ENCODE measurements at regions of chr17 and their contacts with region 1.

Region 1: GRCh38 chr17:3012926-3013581 is 50.4 kb downstream of the OR1D5 start:
- DNase-seq: peak; percentile 86
- ATAC-seq: peak; percentile 97
- H3K4me3 Mint-ChIP-seq: no peak overlapping the region
- H3K27ac Mint-ChIP-seq: no peak overlapping the region
- H3K4me1 Mint-ChIP-seq: no peaks in the 10 kb centered on the region
- H3K27me3 Mint-ChIP-seq: no peaks in the 10 kb centered on the region
- CTCF ChIP-seq: peak; percentile 77

Region 2: DNA sequence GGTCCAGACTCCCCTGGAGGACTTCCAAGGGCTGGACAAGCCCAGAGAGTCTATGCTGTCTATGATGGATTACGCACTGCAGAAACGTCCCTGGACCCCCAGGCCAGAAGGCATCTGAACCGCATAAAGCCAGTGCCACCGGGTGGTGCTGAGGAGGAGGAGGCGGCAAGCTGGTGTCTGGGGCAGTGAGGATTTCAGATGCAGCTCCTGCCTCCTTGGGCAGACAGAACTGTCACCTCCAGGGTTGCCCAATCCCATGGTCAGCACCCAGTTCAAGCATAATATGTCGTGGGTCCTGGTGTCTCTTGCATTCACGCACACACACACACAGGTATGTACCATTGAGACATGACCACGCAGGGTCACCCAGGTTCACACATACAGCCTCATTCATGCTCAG is 191.2 kb before region 1 on chr17:
- CTCF ChIA-PET with region 1: interaction called, 80 read pairs
- POLR2A ChIA-PET with region 1: no interaction called
- DNase-seq: no peak
- ATAC-seq: no peak
- H3K4me3 Mint-ChIP-seq: no peak overlapping the region
- H3K27ac Mint-ChIP-seq: no peak overlapping the region
- H3K4me1 Mint-ChIP-seq: peaks cover 4% of the 10 kb centered on the region; the same call in 1 of the 2 replicates
- H3K27me3 Mint-ChIP-seq: no peaks in the 10 kb centered on the region
- CTCF ChIP-seq: no peak

Region 3: GRCh38 chr17:2828397-2829038 is 184.5 kb before region 1 on chr17:
- CTCF ChIA-PET with region 1: interaction called, 80 read pairs
- POLR2A ChIA-PET with region 1: no interaction called
- DNase-seq: peak; percentile 95
- ATAC-seq: peak; percentile 91
- H3K4me3 Mint-ChIP-seq: no peak overlapping the region
- H3K27ac Mint-ChIP-seq: no peak overlapping the region
- H3K4me1 Mint-ChIP-seq: peaks cover 11% of the 10 kb centered on the region
- H3K27me3 Mint-ChIP-seq: no peaks in the 10 kb centered on the region
- CTCF ChIP-seq: peak; percentile 94

Region 4: GRCh38 chr17:2853111-2853721 is 159.8 kb before region 1 on chr17:
- CTCF ChIA-PET with region 1: interaction called, 73 read pairs
- POLR2A ChIA-PET with region 1: interaction called, 3 read pairs
- DNase-seq: peak; percentile 71
- ATAC-seq: peak; percentile 3
- H3K4me3 Mint-ChIP-seq: peak overlapping the region; percentile 51
- H3K27ac Mint-ChIP-seq: no peak overlapping the region
- H3K4me1 Mint-ChIP-seq: peaks cover 46% of the 10 kb centered on the region
- H3K27me3 Mint-ChIP-seq: no peaks in the 10 kb centered on the region
- CTCF ChIP-seq: no peak

Region 5: GRCh38 chr17:2946144-2946543 is 66.9 kb before region 1 on chr17:
- CTCF ChIA-PET with region 1: no interaction called
- POLR2A ChIA-PET with region 1: no interaction called
- DNase-seq: no peak
- ATAC-seq: no peak
- H3K4me3 Mint-ChIP-seq: no peak overlapping the region
- H3K27ac Mint-ChIP-seq: no peak overlapping the region; the same call in 1 of the 2 replicates
- H3K4me1 Mint-ChIP-seq: peaks cover 2% of the 10 kb centered on the region; the same call in 1 of the 2 replicates
- H3K27me3 Mint-ChIP-seq: no peaks in the 10 kb centered on the region
- CTCF ChIP-seq: no peak

Region 6: GRCh38 chr17:3030096-3030495 is 17.0 kb after region 1 on chr17:
- CTCF ChIA-PET with region 1: interaction called, 10 read pairs
- POLR2A ChIA-PET with region 1: no interaction called
- DNase-seq: no peak
- ATAC-seq: no peak
- H3K4me3 Mint-ChIP-seq: no peak overlapping the region
- H3K27ac Mint-ChIP-seq: no peak overlapping the region
- H3K4me1 Mint-ChIP-seq: no peaks in the 10 kb centered on the region
- H3K27me3 Mint-ChIP-seq: no peaks in the 10 kb centered on the region
- CTCF ChIP-seq: no peak

Measured in WTC11 (cell line).